Heart left ventricle (tissue), 16 donors: ENCODE measurements at regions of chr1 and their contacts with region 1.

Region 1: DNA sequence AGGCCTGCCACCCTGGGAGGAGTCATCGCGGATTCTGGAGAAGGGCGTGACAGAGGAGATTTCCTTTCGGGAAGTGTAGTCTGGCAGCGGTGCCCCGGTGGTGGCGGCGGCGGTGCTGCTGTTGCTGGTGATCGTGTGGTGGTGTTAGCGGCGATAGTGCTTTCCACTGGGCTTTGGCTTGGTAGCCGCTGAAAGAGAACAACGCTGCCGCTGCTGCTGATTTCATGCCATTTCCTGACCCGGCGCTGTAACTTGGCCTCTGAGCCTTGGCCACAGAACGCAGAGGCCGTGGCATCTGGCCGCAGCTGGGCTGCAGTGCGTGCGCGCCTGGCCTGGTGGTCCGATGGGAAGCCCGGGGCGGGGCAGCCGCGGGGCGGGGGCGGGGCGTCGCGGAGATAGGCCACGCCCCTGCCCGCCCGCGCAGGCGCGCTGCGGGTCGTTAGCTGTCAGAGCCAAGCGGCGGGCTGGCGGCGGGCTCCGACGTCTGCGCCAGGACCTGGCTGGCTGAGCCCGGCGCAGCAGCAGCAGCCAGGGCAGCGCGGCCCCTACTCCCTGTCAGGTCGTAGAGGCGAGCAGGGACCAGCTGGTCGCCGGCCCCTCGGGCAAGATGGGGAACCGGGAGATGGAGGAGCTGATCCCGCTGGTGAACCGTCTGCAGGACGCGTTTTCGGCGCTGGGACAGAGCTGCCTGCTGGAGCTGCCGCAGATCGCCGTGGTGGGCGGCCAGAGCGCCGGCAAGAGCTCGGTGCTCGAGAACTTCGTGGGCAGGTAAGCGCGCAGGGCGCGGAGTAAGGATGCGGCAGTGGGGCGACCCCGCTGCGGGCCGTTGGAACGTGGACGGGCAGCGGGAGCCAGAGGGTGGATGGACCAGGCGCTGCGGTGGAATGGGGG is at the start of gene DNM3:
- DNase-seq: peak; percentile 82 to 93 (median 87)
- ATAC-seq: peak; percentile 77 to 99 (median 98)
- H3K4me3 ChIP-seq: peak within 1 kb of the TSS; percentile 58 to 91 (median 80)
- H3K27ac ChIP-seq: peak within 1 kb of the TSS in 11 of 12 donors; percentile 24 to 79 (median 64)
- H3K4me1 ChIP-seq: peaks cover 0 to 24% (median 7%) of the 10 kb centered on the region in 12 donors
- H3K27me3 ChIP-seq: peaks cover 0 to 7% (median 0%) of the 10 kb centered on the region in 9 donors
- CTCF ChIP-seq: no peak
- POLR2A ChIP-seq: peak in 1 of 2 donors; percentile 74
- total RNA-seq, gene DNM3: 1.1 to 3.9 (median 2.2) TPM

Region 2: GRCh38 chr1:171801487-171801891 is 39.8 kb before region 1 on chr1:
- intact Hi-C with region 1: loop called in 1 of 10 experiments (anchors 5 kb)
- DNase-seq: no peak
- ATAC-seq: peak in 3 of 4 donors; percentile 33 to 46 (median 44)
- H3K4me3 ChIP-seq: no peak overlapping the region
- H3K27ac ChIP-seq: no peak overlapping the region
- H3K4me1 ChIP-seq: peaks cover 0 to 40% (median 10%) of the 10 kb centered on the region in 12 donors
- H3K27me3 ChIP-seq: no peaks in the 10 kb centered on the region
- CTCF ChIP-seq: peak; percentile 57 to 84 (median 78)
- POLR2A ChIP-seq: no peak

Region 3: GRCh38 chr1:171901245-171901644 is 60.0 kb after region 1 on chr1:
- intact Hi-C with region 1: loop called in 1 of 10 experiments (anchors 10 kb)
- DNase-seq: no peak
- ATAC-seq: no peak
- H3K4me3 ChIP-seq: no peak overlapping the region
- H3K27ac ChIP-seq: no peak overlapping the region
- H3K4me1 ChIP-seq: peaks cover 0 to 7% (median 0%) of the 10 kb centered on the region in 12 donors
- H3K27me3 ChIP-seq: no peaks in the 10 kb centered on the region
- CTCF ChIP-seq: no peak
- POLR2A ChIP-seq: no peak

Region 4: GRCh38 chr1:171913385-171913784 is 72.1 kb after region 1 on chr1:
- intact Hi-C with region 1: loop called in 2 of 10 experiments (anchors 10 kb)
- DNase-seq: peak in 2 of 5 donors; percentile 33 to 50
- ATAC-seq: peak; percentile 51 to 78 (median 70)
- H3K4me3 ChIP-seq: no peak overlapping the region
- H3K27ac ChIP-seq: peak overlapping the region in 9 of 12 donors; percentile 3 to 58 (median 32)
- H3K4me1 ChIP-seq: peaks cover 0 to 21% (median 9%) of the 10 kb centered on the region in 12 donors
- H3K27me3 ChIP-seq: no peaks in the 10 kb centered on the region
- CTCF ChIP-seq: no peak
- POLR2A ChIP-seq: no peak